Transverse colon (tissue), 4 donors: ENCODE measurements at regions of chr2 and their contacts with region 1.

Region 1: GRCh38 chr2:102915128-102915527 is 153.3 kb downstream of the TMEM182 start:
- DNase-seq: no peak
- H3K4me3 ChIP-seq: no peak overlapping the region
- H3K27ac ChIP-seq: no peak overlapping the region
- H3K4me1 ChIP-seq: no peaks in the 10 kb centered on the region
- H3K27me3 ChIP-seq: no peaks in the 10 kb centered on the region
- CTCF ChIP-seq: no peak
- EP300 ChIP-seq: no peak
- POLR2A ChIP-seq: no peak

Region 2: DNA sequence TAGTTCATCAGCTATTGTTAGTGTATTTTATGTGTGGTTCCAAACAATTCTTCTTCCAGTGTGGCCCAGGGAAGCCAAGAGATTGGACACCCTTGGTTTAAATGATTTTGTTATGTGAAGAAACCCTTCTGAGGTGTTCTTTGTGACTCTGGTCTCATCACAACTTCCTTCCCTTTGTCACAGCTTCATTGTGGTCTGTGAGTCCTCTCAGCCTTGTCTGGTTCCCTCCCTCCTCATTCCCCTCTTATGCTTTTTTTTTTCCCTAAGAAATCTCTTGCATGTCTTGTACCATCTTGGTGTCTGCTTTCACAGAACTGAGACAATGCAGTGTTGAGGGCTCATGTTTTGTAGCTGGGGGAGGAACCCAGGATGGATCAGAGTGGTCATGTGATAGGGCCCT is 34.4 kb before region 1 on chr2:
- in situ Hi-C with region 1: no loop called
- intact Hi-C with region 1: loop called (anchors 2 kb)
- DNase-seq: no peak
- H3K4me3 ChIP-seq: no peak overlapping the region
- H3K27ac ChIP-seq: no peak overlapping the region
- H3K4me1 ChIP-seq: no peaks in the 10 kb centered on the region
- H3K27me3 ChIP-seq: no peaks in the 10 kb centered on the region
- CTCF ChIP-seq: no peak
- EP300 ChIP-seq: no peak
- POLR2A ChIP-seq: no peak